Activated T-helper 2 cell treated with anti-CD3 and anti-CD28 coated beads, Interferon-gamma antibody, Interleukin-2, Interleukin-4, amounts not matched to agents 10 μg/mL and 5 μg/mL and 100 μg/mL, durations not matched to agents 14 hours and 24 hours and 36 hours (primary cell): ENCODE measurements at regions of chr12 and their contacts with region 1.

Region 1: GRCh38 chr12:106136263-106136662 is 2.5 kb downstream of the NUAK1 start:
- DNase-seq: peak; percentile 49
- H3K4me3 Mint-ChIP-seq: no peak overlapping the region
- H3K27ac Mint-ChIP-seq: no peak overlapping the region
- H3K4me1 Mint-ChIP-seq: peaks cover 3% of the 10 kb centered on the region
- H3K27me3 Mint-ChIP-seq: peaks cover 53% of the 10 kb centered on the region

Region 2: GRCh38 chr12:105420659-105421240 is 715.5 kb before region 1 on chr12:
- intact Hi-C with region 1: loop called (anchors 1 kb)
- DNase-seq: peak; percentile 33
- H3K4me3 Mint-ChIP-seq: no peak overlapping the region
- H3K27ac Mint-ChIP-seq: no peak overlapping the region
- H3K4me1 Mint-ChIP-seq: peaks cover 7% of the 10 kb centered on the region
- H3K27me3 Mint-ChIP-seq: peaks cover 11% of the 10 kb centered on the region

Region 3: DNA sequence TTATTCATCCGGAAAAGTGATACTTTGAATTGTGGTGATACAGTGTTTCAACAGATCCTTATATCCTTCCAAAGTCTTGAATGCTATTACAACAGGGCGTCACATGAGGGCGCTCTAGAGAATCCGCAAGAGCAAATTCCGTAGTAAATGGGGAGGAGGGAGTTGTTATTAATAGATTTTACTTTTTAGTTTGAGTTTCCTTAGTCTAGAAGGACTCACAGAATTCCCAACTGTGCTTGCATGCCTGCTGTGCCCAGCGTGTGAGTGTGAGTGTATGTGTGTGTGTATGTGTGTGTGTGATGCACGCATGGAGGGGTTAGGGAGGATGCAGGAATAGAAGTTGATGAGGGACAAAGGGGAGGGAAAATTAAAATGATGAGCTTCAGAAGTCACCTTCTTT is 430.5 kb before region 1 on chr12:
- intact Hi-C with region 1: loop called (anchors 1 kb)
- DNase-seq: no peak
- H3K4me3 Mint-ChIP-seq: no peak overlapping the region
- H3K27ac Mint-ChIP-seq: no peak overlapping the region
- H3K4me1 Mint-ChIP-seq: no peaks in the 10 kb centered on the region
- H3K27me3 Mint-ChIP-seq: no peaks in the 10 kb centered on the region

Region 4: GRCh38 chr12:106030210-106031175 is 105.8 kb before region 1 on chr12:
- intact Hi-C with region 1: loop called (anchors 10 kb)
- DNase-seq: peak; percentile 10
- H3K4me3 Mint-ChIP-seq: peak overlapping the region; percentile 49
- H3K27ac Mint-ChIP-seq: peak overlapping the region; percentile 69
- H3K4me1 Mint-ChIP-seq: peaks cover 13% of the 10 kb centered on the region
- H3K27me3 Mint-ChIP-seq: peaks cover 5% of the 10 kb centered on the region

Region 5: DNA sequence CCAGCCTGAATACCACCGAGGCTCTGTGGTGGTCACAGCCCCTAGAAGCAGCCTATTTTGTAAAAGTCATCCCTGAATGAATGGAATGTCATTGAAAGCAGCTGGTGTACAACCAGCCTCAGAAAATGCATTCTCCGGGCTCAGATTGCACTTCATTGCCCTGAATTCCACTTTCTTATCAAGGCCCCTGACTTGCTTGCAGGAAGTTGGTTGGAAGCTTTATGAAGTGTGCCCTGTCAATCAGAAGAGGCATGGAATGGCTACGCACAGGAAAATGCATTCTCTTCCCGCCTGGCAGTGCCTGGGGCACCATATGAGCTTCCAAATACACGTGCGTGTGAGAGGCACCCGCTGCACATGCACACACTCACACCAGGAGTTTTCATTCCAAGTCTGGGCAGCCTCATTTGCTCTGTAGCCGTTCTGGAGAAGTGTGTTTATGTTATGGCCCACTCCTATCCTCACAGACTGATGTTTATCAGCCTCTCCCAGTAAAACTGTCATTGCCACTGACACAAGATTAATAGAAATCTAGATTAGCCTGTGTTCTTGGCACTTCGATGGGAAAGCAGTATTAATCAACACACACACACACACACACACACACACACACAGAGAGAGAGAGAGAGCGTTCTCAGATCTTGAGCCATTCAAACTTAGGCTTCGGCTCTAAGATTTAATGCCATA is 61.4 kb before region 1 on chr12:
- intact Hi-C with region 1: no loop called
- DNase-seq: no peak
- H3K4me3 Mint-ChIP-seq: no peak overlapping the region
- H3K27ac Mint-ChIP-seq: no peak overlapping the region
- H3K4me1 Mint-ChIP-seq: peaks cover 10% of the 10 kb centered on the region
- H3K27me3 Mint-ChIP-seq: peaks cover 31% of the 10 kb centered on the region

Region 6: DNA sequence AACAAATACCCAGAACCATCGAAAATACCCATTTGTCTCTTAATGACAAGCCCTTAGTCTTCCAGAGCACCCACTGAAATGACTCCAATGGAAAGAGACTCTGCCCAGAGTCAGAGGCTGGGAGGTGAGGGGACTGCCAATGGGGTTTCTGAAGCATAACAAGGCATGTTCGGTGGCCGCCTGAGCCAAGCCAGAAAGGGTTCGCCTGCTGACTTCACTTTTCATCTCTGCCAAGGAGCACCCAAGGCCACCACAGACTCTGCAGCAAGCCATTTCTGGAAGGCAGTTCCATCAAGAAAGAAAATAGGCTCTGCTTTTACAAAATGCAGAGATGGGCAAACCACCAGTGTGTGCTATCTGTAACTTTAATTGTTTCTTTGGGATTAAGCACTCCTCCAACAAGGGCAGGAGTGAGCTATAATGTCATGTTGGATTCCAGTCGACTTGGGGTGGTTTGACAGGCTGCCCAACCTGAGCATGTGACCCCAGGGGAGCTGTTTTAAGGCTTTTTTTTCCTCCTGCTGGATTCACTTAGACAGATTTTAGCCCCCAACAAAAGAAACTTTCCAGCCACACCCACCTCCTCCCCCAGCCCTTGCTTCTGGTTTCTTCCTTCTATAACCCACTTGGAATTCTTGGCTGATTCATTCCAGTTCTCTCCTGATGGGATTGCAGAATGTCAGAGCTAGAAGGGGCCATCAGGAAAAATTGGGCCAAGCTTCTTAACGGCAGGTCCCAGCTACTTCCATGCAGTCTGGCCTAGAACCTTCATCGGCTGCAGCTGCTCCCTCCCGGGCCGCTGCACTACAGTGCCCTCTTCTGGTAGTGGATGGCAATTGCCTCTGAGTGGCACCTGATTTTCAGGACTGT is 87.5 kb after region 1 on chr12:
- intact Hi-C with region 1: loop called (anchors 5 kb)
- DNase-seq: peak; percentile 65
- H3K4me3 Mint-ChIP-seq: no peak overlapping the region
- H3K27ac Mint-ChIP-seq: no peak overlapping the region
- H3K4me1 Mint-ChIP-seq: peaks cover 21% of the 10 kb centered on the region
- H3K27me3 Mint-ChIP-seq: peaks cover 6% of the 10 kb centered on the region

Region 7: DNA sequence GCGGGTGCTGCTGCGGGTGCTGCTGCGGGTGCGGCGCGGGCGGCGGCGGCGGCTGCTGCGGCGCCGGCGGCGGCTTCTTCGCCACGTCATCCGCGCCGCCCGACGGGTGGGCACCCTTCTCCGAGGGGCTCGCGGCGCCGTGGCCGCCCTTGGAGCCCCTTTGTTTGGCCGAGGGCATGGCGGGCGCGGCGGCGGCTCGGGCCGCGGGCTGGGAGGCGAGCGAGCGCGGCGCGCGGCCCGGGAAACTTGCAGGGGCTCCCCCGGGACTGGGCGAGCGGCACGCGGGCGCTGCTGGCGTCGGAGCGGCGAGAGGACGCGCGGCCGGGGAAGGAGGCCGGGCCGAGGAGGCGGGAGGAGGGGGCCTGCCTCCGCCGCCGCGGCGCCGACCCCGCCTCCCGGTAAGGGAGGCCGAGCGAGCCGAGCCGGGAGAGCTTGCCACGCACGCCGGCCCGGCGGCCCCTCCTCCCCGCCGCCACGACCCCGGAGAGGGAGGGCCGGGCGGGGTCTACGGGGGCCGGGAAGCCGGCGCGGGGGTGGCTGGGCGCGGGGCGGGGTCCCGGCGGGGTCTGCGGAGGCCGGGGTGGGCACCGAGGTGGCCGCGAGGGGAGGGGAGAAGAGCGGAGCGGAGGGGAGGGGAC is 111.5 kb after region 1 on chr12 and contains the start of gene CKAP4:
- intact Hi-C with region 1: no loop called
- DNase-seq: peak; percentile 24
- H3K4me3 Mint-ChIP-seq: peak within 1 kb of the TSS; percentile 68
- H3K27ac Mint-ChIP-seq: peak within 1 kb of the TSS; percentile 67
- H3K4me1 Mint-ChIP-seq: peaks cover 9% of the 10 kb centered on the region
- H3K27me3 Mint-ChIP-seq: peaks cover 22% of the 10 kb centered on the region
- total RNA-seq, gene CKAP4: 5.0 and 5.7 TPM in 2 replicates

Region 8: GRCh38 chr12:106309671-106310505 is 173.6 kb after region 1 on chr12:
- intact Hi-C with region 1: no loop called
- DNase-seq: no peak
- H3K4me3 Mint-ChIP-seq: no peak overlapping the region
- H3K27ac Mint-ChIP-seq: no peak overlapping the region
- H3K4me1 Mint-ChIP-seq: peaks cover 12% of the 10 kb centered on the region
- H3K27me3 Mint-ChIP-seq: no peaks in the 10 kb centered on the region

Region 9: GRCh38 chr12:106586803-106587684 is 450.8 kb after region 1 on chr12:
- intact Hi-C with region 1: loop called (anchors 5 kb)
- DNase-seq: no peak
- H3K4me3 Mint-ChIP-seq: no peak overlapping the region
- H3K27ac Mint-ChIP-seq: no peak overlapping the region
- H3K4me1 Mint-ChIP-seq: peaks cover 15% of the 10 kb centered on the region
- H3K27me3 Mint-ChIP-seq: peaks cover 80% of the 10 kb centered on the region